Naive thymus-derived CD4-positive, alpha-beta T cell (primary cell): ENCODE measurements at regions of chr3 and their contacts with region 1.

Region 1: GRCh38 chr3:71076361-71077002 is 507.0 kb downstream of the FOXP1 start:
- DNase-seq: no peak
- ATAC-seq: no peak
- H3K4me3 ChIP-seq: no peak overlapping the region
- H3K4me3 Mint-ChIP-seq: peak overlapping the region in 4 of 10 donors; percentile 10 to 66 (median 54)
- H3K27ac ChIP-seq: peak overlapping the region; percentile 44
- H3K27ac Mint-ChIP-seq: peak overlapping the region in 8 of 9 donors; percentile 74 to 93 (median 81)
- H3K4me1 ChIP-seq: peaks cover 28 to 92% of the 10 kb centered on the region in 2 donors
- H3K4me1 Mint-ChIP-seq: peaks cover 60 to 98% (median 94%) of the 10 kb centered on the region in 7 donors
- H3K27me3 ChIP-seq: no peaks in the 10 kb centered on the region
- H3K27me3 Mint-ChIP-seq: no peaks in the 10 kb centered on the region

Region 2: GRCh38 chr3:71092665-71093064 is 16.2 kb after region 1 on chr3:
- CTCF ChIA-PET with region 1: no interaction called
- POLR2A ChIA-PET with region 1: interaction called, 6 read pairs
- intact Hi-C with region 1: loop called in 1 of 2 experiments (anchors 2 kb)
- DNase-seq: peak in 3 of 9 donors; percentile 14 to 27 (median 25)
- ATAC-seq: peak; percentile 47
- H3K4me3 ChIP-seq: no peak overlapping the region
- H3K4me3 Mint-ChIP-seq: peak overlapping the region in 9 of 10 donors; percentile 2 to 66 (median 52)
- H3K27ac ChIP-seq: peak overlapping the region; percentile 7
- H3K27ac Mint-ChIP-seq: peak overlapping the region in 8 of 9 donors; percentile 74 to 93 (median 84)
- H3K4me1 ChIP-seq: peaks cover 27 to 60% of the 10 kb centered on the region in 2 donors
- H3K4me1 Mint-ChIP-seq: peaks cover 57 to 97% (median 94%) of the 10 kb centered on the region in 7 donors
- H3K27me3 ChIP-seq: no peaks in the 10 kb centered on the region
- H3K27me3 Mint-ChIP-seq: no peaks in the 10 kb centered on the region